HEK293 (cell line): ENCODE measurements at regions of chr19 and their contacts with region 1.

Region 1: DNA sequence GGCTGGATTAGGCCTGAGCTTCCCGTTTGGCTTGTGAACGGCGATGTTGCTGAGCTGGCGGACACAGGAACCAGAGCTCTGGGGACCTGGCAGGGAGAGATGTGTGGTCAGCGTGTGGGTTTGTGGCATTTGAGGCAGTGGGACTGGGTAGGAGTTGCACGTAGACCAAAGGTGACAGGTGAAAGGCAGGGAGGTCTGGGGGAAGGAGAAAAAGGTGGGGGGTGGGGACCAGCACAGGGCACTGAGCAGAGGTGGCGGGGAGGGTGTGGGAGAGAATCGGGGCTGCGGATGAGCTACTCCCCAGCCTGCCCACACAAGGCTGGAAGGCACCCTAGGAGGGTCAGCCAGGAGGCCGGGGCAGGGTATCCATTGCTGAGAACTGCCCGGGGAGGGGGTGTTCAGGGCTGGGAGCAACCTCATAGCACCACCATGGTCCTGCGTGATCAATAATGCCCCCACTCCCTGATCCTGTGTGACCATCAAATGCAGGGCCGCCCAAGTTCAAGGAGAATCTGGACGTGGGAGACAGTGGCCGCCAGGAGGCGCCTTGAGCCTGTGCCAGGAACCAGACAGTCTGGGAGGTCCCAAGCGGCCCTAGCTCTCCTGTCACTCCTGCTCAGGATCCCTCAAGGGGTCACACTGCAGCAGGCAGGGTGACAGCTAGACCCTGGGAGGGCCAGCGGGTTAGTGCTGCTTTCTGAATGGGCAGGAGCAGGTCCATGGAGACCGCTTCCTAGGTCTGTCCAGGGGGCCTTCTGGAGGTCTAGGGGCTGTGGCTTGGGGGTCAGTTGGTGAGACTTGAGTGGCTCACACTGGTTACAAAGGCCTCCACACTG is 12.8 kb upstream of the SELENOW start:
- H3K4me3 ChIP-seq: no peak overlapping the region
- H3K27ac ChIP-seq: no peak overlapping the region
- H3K4me1 ChIP-seq: no peaks in the 10 kb centered on the region
- CTCF ChIP-seq: peak; percentile 76

Region 2: GRCh38 chr19:47540728-47541127 is 225.0 kb before region 1 on chr19:
- CTCF ChIA-PET with region 1: no interaction called
- POLR2A ChIA-PET with region 1: no interaction called
- H3K4me3 ChIP-seq: no peak overlapping the region
- H3K27ac ChIP-seq: no peak overlapping the region
- H3K4me1 ChIP-seq: peaks cover 2% of the 10 kb centered on the region; the same call in 1 of the 2 replicates
- CTCF ChIP-seq: no peak

Region 3: DNA sequence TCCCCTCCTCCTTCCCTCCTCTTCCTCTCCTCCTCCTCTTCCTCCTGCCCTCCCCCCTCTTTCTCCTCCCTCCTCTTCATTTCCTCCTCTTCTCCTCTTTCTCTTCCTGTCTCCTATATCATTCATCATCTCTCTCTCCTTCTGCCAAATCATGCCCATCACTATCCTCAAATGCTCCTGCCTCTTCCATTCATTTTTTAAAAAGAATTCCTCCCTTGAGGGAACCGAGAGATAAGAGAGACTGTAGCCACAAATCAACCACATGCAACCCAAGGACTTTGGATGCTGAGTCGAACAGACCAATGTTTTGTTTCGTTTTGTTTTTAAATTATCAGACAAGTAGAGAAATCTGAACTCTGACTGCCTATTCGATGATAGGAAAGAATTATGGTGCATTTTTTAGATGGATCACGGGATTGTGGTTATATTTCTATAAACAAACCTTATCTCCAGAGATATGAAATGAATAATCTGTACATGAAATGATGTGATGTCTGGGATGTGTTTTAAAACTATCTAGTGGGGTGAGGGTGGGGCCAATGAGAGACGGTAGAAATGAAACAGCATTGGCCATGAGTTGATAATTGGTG is 183.3 kb before region 1 on chr19:
- CTCF ChIA-PET with region 1: no interaction called
- POLR2A ChIA-PET with region 1: no interaction called
- H3K4me3 ChIP-seq: no peak overlapping the region
- H3K27ac ChIP-seq: no peak overlapping the region
- H3K4me1 ChIP-seq: peaks cover 6% of the 10 kb centered on the region
- CTCF ChIP-seq: no peak

Region 4: GRCh38 chr19:47750752-47751151 is 15.0 kb before region 1 on chr19:
- CTCF ChIA-PET with region 1: interaction called, 14 read pairs
- POLR2A ChIA-PET with region 1: interaction called, 11 read pairs
- H3K4me3 ChIP-seq: no peak overlapping the region
- H3K27ac ChIP-seq: no peak overlapping the region
- H3K4me1 ChIP-seq: 0 out of 2 replicates have a peak, but pooled peaks cover 5% of the 10 kb centered on the region
- CTCF ChIP-seq: no peak

Region 5: DNA sequence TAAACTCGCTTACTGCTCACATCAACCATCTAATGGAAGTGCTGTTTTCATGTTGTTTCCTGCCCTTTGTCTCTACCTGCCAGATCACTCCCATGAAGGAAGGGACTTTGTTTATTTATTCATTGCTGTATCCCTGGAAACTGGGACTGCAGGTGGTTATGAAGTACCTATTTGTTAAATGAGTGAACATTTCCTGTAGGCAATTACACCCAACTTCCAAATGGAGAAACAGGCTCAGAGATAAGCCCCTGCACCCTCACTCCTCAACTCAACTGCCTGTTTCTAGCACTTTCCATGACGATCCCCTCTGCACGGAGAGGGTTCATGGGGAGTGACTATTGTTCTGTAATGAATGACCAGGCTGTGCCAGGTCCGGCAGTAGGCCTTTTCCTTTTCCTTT is 10.8 kb after region 1 on chr19:
- CTCF ChIA-PET with region 1: interaction called, 21 read pairs
- POLR2A ChIA-PET with region 1: interaction called, 3 read pairs
- H3K4me3 ChIP-seq: no peak overlapping the region
- H3K27ac ChIP-seq: no peak overlapping the region
- H3K4me1 ChIP-seq: peaks cover 9% of the 10 kb centered on the region
- CTCF ChIP-seq: no peak